ENCODE measurements at regions of chr7 and their contacts with region 1.

Region 1: DNA sequence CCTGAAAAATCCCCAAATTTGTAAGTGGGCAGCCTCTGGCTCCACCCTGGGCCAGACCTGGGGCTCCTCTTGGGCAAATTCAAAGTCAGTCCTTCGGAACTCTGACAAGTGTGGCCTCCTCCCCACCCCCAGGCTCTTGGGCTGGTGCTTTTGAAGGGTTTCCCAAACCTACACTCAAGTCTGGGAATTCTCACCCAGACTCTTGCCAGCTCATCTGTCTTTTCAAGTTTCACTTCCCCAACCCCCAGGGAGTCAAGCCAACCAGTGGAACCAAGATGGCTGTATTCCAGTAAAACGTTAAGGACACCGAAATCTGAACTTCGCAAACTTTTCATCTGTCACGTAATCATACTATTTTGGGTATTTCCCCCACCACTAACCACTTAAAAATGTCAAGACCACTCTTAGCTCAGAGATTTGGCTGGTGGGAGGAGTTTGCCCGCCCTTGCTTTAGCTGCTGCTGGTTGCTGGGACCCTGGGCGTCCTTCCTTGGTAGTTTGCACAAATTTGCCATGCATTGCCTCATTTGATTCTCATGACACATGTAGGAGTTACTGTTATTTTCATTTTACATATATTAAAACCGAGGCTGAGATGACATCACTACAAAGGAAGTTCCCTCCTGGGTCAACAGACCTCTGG is 1.7 kb upstream of the MYO1G start:
- DNase-seq: peak; percentile 95
- H3K4me3 Mint-ChIP-seq: peak overlapping the region; percentile 99
- H3K27ac Mint-ChIP-seq: peak overlapping the region; percentile 99
- H3K4me1 Mint-ChIP-seq: peaks cover 58% of the 10 kb centered on the region
- H3K27me3 Mint-ChIP-seq: no peaks in the 10 kb centered on the region

Region 2: GRCh38 chr7:43590862-43591550 is 1389.5 kb before region 1 on chr7:
- CTCF ChIA-PET with region 1: no interaction called
- intact Hi-C with region 1: loop called (anchors 5 kb)
- DNase-seq: peak; percentile 73
- H3K4me3 Mint-ChIP-seq: peak overlapping the region; percentile 37
- H3K27ac Mint-ChIP-seq: peak overlapping the region; percentile 39
- H3K4me1 Mint-ChIP-seq: peaks cover 81% of the 10 kb centered on the region
- H3K27me3 Mint-ChIP-seq: no peaks in the 10 kb centered on the region

Region 3: GRCh38 chr7:44606450-44607254 is 373.9 kb before region 1 on chr7 and contains the start of gene OGDH:
- CTCF ChIA-PET with region 1: no interaction called
- intact Hi-C with region 1: loop called (anchors 1 kb)
- DNase-seq: peak; percentile 100
- H3K4me3 Mint-ChIP-seq: peak within 1 kb of the TSS; percentile 96
- H3K27ac Mint-ChIP-seq: peak within 1 kb of the TSS; percentile 97
- H3K4me1 Mint-ChIP-seq: peaks cover 31% of the 10 kb centered on the region
- H3K27me3 Mint-ChIP-seq: no peaks in the 10 kb centered on the region
- total RNA-seq, gene OGDH: 73.9 to 78.4 TPM

Region 4: GRCh38 chr7:44748045-44748947 is 232.2 kb before region 1 on chr7 and contains the start of gene ZMIZ2:
- CTCF ChIA-PET with region 1: no interaction called
- intact Hi-C with region 1: loop called (anchors 1 kb)
- DNase-seq: peak; percentile 92
- H3K4me3 Mint-ChIP-seq: peak within 1 kb of the TSS; percentile 82
- H3K27ac Mint-ChIP-seq: peak within 1 kb of the TSS; percentile 88
- H3K4me1 Mint-ChIP-seq: peaks cover 39% of the 10 kb centered on the region
- H3K27me3 Mint-ChIP-seq: no peaks in the 10 kb centered on the region
- total RNA-seq, gene ZMIZ2: 83.1 to 86.5 TPM

Region 5: DNA sequence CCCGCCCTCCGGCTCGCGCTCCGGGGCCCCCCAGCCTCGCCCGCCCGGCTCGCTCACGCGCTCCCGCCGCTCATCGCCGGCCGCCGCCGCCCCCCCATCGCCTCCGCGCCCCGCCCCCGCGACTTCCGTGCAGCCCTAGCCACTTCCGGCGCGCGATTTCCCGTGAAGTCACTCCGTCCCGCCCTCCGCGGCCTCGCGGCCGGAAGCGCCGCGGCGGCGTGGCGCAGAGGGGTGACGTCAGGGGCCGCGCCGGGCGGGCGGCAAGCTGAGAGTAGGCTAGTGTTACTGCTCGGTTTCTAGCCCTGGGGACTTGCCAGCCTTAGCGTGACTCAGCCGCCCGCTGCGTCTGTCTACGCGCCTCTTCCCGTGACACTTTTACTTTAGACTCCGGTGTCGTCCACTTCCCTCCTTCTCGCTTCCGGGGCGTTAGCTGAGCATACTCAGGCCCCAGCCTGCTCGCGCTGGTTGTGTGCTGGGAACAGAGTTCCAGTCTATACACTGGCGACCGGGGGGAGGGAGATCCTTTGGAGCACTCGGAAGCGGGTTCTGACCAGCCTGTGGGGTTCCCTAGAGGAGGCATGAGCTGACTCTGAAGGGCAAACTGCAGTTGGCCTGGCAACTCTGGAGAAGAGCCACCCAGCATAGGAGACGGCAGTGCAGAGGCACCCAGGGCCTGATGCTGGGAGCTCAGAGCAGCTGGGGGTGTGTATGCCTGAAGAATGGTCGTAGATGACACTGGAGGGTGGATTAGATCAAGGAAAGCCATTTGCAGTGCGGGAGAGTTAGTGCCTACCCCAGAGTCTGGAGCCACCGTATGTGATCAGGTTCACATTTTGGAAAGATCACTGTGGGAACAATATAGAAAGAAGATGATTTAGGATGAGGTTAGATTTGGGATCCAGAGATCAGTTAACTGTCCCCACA is 94.9 kb before region 1 on chr7 and contains the start of gene PURB:
- CTCF ChIA-PET with region 1: no interaction called
- intact Hi-C with region 1: loop called (anchors 1 kb)
- DNase-seq: peak; percentile 98
- H3K4me3 Mint-ChIP-seq: peak within 1 kb of the TSS; percentile 96
- H3K27ac Mint-ChIP-seq: peak within 1 kb of the TSS; percentile 100
- H3K4me1 Mint-ChIP-seq: peaks cover 46% of the 10 kb centered on the region
- H3K27me3 Mint-ChIP-seq: no peaks in the 10 kb centered on the region
- total RNA-seq, gene PURB: 12.9 to 13.1 TPM

Region 6: DNA sequence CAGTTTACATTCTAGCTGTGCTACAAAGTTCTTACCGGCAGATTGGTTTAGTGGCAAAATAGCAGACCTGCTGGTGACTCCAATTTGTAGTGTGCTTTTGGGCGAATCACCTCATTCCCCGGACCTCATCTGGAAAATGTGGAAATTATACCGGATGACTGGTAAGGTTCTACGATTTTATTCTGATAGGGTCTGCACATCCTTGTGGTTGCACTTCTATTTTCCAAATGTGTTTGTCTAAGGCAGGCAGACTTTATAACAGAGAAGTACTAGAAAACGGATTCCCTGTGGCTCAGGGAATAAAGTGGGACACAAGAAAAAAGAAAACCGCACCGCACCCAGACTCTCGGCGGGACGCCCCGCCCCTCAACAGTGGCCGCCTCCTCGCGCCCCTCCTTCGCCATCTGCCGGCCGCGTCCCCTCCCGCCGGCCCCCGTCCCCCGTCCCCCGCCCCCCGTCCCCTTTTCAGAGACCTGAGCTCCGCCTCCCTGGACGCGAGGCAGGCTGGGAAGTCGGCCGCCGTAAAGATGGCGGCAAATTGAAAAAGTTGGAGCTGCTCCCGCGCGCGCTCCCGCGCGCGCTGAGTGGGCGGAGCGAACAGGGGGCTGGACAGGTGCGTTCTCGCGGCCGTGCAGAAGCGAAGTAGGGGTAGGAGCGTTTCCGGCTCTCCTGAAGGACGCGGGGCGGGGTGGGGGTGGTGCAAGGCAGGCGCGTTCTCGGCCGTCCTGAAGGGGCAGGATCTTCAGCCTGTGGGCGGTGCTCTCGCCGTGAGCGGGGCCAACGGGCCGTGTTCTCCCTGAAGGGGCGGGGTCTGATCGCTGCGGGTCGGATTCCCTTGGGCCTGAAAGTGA is 19.0 kb after region 1 on chr7:
- CTCF ChIA-PET with region 1: interaction called, 4 read pairs
- intact Hi-C with region 1: loop called (anchors 1 kb)
- DNase-seq: peak; percentile 100
- H3K4me3 Mint-ChIP-seq: peak overlapping the region; percentile 88
- H3K27ac Mint-ChIP-seq: peak overlapping the region; percentile 94
- H3K4me1 Mint-ChIP-seq: peaks cover 56% of the 10 kb centered on the region
- H3K27me3 Mint-ChIP-seq: no peaks in the 10 kb centered on the region

Region 7: GRCh38 chr7:45111298-45112223 is 131.0 kb after region 1 on chr7 and contains the start of gene TBRG4:
- CTCF ChIA-PET with region 1: interaction called, 4 read pairs
- intact Hi-C with region 1: loop called (anchors 1 kb)
- DNase-seq: peak; percentile 96
- H3K4me3 Mint-ChIP-seq: peak within 1 kb of the TSS; percentile 85
- H3K27ac Mint-ChIP-seq: peak within 1 kb of the TSS; percentile 89
- H3K4me1 Mint-ChIP-seq: peaks cover 40% of the 10 kb centered on the region
- H3K27me3 Mint-ChIP-seq: no peaks in the 10 kb centered on the region
- total RNA-seq, gene TBRG4: 127 to 136 TPM

Region 8: GRCh38 chr7:45359776-45360175 is 379.3 kb after region 1 on chr7:
- CTCF ChIA-PET with region 1: no interaction called
- intact Hi-C with region 1: no loop called
- DNase-seq: no peak
- H3K4me3 Mint-ChIP-seq: no peak overlapping the region
- H3K27ac Mint-ChIP-seq: no peak overlapping the region
- H3K4me1 Mint-ChIP-seq: no peaks in the 10 kb centered on the region
- H3K27me3 Mint-ChIP-seq: peaks cover 5% of the 10 kb centered on the region